ENCODE measurements at regions of chr7 and their contacts with region 1.

Region 1: GRCh38 chr7:55132890-55133551 is 114.2 kb downstream of the EGFR start:
- DNase-seq: peak in 2 of 5 donors; percentile 33 to 50
- ATAC-seq: peak in 2 of 4 donors; percentile 3 to 35
- H3K4me3 ChIP-seq: no peak overlapping the region
- H3K27ac ChIP-seq: peak overlapping the region in 11 of 12 donors; percentile 58 to 89 (median 77)
- H3K4me1 ChIP-seq: peaks cover 15 to 61% (median 51%) of the 10 kb centered on the region in 12 donors
- H3K27me3 ChIP-seq: no peaks in the 10 kb centered on the region
- CTCF ChIP-seq: no peak
- POLR2A ChIP-seq: no peak

Region 2: DNA sequence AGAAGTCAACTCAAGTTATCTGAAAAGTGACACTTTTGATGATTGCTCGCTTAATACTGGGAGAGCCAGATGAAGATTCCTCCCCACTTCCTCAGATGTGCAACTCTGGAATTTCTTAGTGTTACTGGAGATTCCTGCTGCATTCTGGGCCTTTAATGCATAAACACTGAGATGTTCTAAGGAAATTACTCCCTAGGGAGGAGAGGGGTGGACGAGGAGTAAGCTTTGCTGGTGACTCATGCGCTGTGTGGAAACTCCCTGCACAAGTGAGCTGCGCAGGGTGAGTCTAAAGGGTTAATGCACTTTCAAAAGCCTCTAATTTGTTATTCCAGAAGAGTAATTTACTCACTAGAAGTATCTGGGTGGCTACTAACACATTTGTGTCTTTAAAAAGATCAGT is 67.9 kb before region 1 on chr7:
- intact Hi-C with region 1: loop called in 1 of 10 experiments (anchors 10 kb)
- DNase-seq: peak in 2 of 5 donors; percentile 49 to 65
- ATAC-seq: peak in 3 of 4 donors; percentile 71 to 84 (median 74)
- H3K4me3 ChIP-seq: no peak overlapping the region
- H3K27ac ChIP-seq: peak overlapping the region in 11 of 12 donors; percentile 8 to 76 (median 63)
- H3K4me1 ChIP-seq: peaks cover 0 to 43% (median 18%) of the 10 kb centered on the region in 12 donors
- H3K27me3 ChIP-seq: no peaks in the 10 kb centered on the region
- CTCF ChIP-seq: no peak
- POLR2A ChIP-seq: no peak

Region 3: DNA sequence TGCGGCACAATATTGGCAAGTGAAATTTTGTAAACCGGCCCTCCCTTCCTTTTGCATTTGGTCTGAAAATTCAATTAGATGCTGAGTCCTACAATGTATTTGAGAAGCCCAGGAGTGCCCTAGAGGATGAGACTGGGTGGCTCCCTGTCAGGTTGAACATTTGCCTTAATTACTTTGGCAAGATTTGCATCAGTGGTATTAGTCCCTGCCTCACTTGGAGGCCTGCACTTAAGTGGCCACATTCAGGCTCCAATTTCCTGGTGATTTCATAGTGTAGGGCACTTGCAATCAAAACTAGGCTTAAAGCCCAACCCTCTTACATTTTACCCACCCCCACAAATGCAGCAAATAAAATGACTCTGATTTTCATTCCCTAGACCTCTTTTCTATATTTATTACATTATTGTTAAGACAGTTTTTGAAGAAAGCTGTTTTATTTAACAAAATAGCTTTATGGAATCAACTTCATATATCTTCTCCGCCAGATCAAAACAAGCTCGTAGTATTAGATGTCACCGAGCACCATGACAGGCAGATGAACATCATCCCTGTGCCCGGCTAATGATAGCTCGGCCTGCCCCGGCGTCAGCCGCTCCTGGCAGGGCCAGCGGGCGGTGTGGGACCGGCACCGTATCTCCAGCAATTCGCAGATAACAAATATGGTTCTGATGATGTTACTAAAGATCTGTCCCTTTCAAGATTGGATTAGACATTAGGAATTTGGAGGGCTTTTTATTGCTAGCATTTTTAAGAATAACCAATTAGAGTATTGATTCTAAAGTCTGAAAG is 40.6 kb before region 1 on chr7:
- intact Hi-C with region 1: loop called in 1 of 10 experiments (anchors 1 kb)
- DNase-seq: no peak
- ATAC-seq: peak in 2 of 4 donors; percentile 16 to 41
- H3K4me3 ChIP-seq: no peak overlapping the region
- H3K27ac ChIP-seq: peak overlapping the region in 9 of 12 donors; percentile 3 to 46 (median 20)
- H3K4me1 ChIP-seq: peaks cover 0 to 52% (median 26%) of the 10 kb centered on the region in 12 donors
- H3K27me3 ChIP-seq: no peaks in the 10 kb centered on the region
- CTCF ChIP-seq: no peak
- POLR2A ChIP-seq: no peak

Region 4: GRCh38 chr7:55100544-55101301 is 32.3 kb before region 1 on chr7:
- intact Hi-C with region 1: loop called in 1 of 10 experiments (anchors 2 kb)
- DNase-seq: peak; percentile 88 to 97 (median 90)
- ATAC-seq: peak; percentile 80 to 92 (median 85)
- H3K4me3 ChIP-seq: peak overlapping the region in 2 of 12 donors; percentile 2 to 10
- H3K27ac ChIP-seq: peak overlapping the region in 11 of 12 donors; percentile 51 to 89 (median 68)
- H3K4me1 ChIP-seq: peaks cover 0 to 58% (median 22%) of the 10 kb centered on the region in 12 donors
- H3K27me3 ChIP-seq: no peaks in the 10 kb centered on the region
- CTCF ChIP-seq: no peak
- POLR2A ChIP-seq: no peak

Region 5: GRCh38 chr7:55192718-55193117 is 59.7 kb after region 1 on chr7:
- intact Hi-C with region 1: loop called in 1 of 10 experiments (anchors 5 kb)
- DNase-seq: no peak
- ATAC-seq: peak in 2 of 4 donors; percentile 20 to 23
- H3K4me3 ChIP-seq: no peak overlapping the region
- H3K27ac ChIP-seq: peak overlapping the region in 9 of 12 donors; percentile 0 to 50 (median 29)
- H3K4me1 ChIP-seq: peaks cover 0 to 49% (median 19%) of the 10 kb centered on the region in 12 donors
- H3K27me3 ChIP-seq: no peaks in the 10 kb centered on the region
- CTCF ChIP-seq: no peak
- POLR2A ChIP-seq: no peak

Region 6: GRCh38 chr7:55432939-55433784 is 300.1 kb after region 1 on chr7:
- intact Hi-C with region 1: no loop called
- DNase-seq: no peak
- ATAC-seq: peak; percentile 47 to 76 (median 66)
- H3K4me3 ChIP-seq: no peak overlapping the region
- H3K27ac ChIP-seq: no peak overlapping the region
- H3K4me1 ChIP-seq: no peaks in the 10 kb centered on the region
- H3K27me3 ChIP-seq: no peaks in the 10 kb centered on the region
- CTCF ChIP-seq: peak; percentile 26 to 59 (median 46)
- POLR2A ChIP-seq: no peak

Measured in heart left ventricle (tissue), 16 donors.